Ascending aorta (tissue), 2 donors: ENCODE measurements at regions of chr19 and their contacts with region 1.

Region 1: DNA sequence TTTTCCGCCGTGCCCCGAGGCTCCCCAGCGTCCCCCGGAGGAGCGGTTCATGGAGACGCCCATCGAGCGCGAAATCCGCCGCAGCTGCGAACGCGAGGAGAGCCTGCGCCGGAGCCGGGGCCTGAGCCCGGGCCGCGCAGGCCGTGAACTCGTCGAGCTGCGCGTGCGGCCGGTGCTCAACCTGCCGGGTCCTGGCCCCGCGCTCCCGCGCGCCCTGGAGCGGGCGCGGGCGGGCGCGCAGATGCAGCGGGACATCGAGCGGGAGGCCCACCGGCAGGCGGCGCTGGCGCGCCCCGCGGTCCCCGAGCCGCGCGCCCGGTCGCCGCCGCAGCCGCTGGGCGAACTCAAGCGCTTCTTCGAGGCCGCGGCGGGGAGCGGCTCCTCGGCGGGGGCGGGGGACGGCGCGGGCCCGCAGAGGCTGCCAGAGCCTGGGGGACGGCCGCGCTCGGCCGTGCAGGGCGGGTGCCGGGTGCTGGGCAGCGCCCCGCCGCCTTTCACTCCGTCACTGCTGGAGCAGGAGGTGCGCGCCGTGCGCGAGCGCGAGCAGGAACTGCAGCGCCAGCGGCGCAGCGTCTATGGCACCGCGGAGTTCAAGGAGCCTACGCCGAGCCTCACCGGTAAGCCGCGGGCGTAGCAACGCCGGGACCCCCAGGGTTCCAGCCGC is 807 bp downstream of the MISP3 start:
- DNase-seq: peak in 1 of 2 donors; percentile 83
- H3K4me3 ChIP-seq: peak overlapping the region; percentile 62 to 73
- H3K27ac ChIP-seq: peak overlapping the region; percentile 90 to 94
- H3K4me1 ChIP-seq: peaks cover 0 to 12% of the 10 kb centered on the region in 2 donors
- H3K27me3 ChIP-seq: no peaks in the 10 kb centered on the region
- CTCF ChIP-seq: peak in 1 of 3 experiments; percentile 97

Region 2: DNA sequence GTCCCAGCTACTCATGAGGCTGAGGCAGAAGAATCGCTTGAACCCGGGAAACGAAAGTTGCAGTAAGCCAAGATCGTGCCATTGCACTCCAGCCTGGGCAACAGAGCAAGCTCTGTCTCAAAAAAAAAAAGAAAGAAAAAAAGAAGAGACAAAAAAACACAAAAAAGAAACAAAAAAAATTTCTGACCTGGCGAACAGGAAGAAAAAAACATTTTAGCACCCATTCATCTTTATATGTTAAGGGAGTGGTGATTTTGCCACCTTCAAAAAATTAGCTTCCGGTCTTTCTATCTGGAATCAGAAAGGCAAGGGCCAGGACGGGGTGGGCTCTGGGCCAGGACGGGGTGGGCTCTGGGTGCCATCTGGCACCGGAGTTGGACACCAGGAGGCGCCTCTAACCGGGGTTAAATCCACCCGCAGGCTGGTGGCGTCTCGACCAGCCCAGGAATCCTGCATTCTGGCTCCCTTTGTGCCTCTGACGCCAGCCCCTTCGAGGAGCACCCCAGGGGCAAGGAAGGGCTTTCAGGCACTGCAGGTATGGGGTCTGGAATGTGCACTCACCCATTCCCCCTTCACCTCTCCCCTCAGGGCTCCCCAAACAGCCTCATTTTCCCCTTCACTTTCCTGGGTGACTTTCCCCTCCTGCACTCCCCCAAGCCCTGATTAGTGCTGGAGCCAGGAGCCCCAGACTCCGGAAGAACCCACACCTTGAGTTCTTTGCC is 288.5 kb before region 1 on chr19:
- intact Hi-C with region 1: loop called (anchors 10 kb)
- DNase-seq: peak; percentile 28 to 87
- H3K4me3 ChIP-seq: no peak overlapping the region
- H3K27ac ChIP-seq: peak overlapping the region; percentile 76 to 94
- H3K4me1 ChIP-seq: peaks cover 25 to 53% of the 10 kb centered on the region in 2 donors
- H3K27me3 ChIP-seq: no peaks in the 10 kb centered on the region
- CTCF ChIP-seq: peak; percentile 72 to 83 (median 76)

Region 3: DNA sequence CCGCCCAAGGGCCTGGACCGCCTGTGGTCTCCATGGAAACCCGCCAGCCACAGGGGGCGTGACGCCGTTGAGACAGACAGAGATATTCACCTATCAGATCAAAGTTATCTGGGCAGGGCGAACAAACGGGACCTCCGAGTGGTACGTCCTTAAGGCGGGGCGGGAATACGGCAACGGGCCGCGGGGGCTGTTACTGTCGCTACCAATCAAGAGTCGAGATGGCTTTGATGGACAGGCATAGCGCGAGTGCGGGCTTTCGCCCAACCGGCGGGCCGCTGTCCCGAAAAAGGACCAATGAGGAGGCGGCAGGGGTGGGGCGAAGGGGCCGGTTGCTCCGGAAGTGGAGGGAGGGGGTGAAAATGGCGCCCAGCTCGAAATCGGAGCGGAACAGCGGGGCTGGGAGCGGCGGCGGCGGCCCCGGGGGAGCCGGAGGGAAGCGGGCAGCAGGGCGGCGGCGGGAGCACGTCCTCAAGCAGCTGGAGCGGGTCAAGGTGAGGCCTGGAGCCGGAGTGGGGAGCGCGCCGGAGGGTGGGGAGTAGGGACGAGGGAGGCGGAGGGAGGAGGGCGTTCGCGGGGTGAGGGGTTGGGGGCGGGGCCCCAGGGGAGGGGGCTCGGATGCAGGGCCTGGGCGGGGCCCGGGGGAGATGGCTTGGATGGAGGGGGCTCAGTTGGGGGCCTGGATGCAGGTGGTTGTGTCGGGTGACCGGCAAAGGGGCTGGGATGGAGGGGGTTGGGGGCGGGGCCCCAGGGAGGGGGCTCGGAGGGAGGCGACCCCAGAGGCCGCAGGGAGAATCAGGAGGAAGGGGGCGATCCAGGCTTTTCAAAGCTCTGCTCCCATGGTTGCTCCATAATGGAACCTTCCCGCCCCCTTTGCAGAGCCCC is 121.0 kb before region 1 on chr19 and contains the start of gene DCAF15:
- intact Hi-C with region 1: loop called (anchors 5 kb)
- DNase-seq: peak; percentile 99 to 100
- H3K4me3 ChIP-seq: peak within 1 kb of the TSS; percentile 79 to 81
- H3K27ac ChIP-seq: peak within 1 kb of the TSS; percentile 76 to 77
- H3K4me1 ChIP-seq: peaks cover 6 to 12% of the 10 kb centered on the region in 2 donors
- H3K27me3 ChIP-seq: no peaks in the 10 kb centered on the region
- CTCF ChIP-seq: no peak
- total RNA-seq, gene DCAF15: 35.0 TPM

Region 4: DNA sequence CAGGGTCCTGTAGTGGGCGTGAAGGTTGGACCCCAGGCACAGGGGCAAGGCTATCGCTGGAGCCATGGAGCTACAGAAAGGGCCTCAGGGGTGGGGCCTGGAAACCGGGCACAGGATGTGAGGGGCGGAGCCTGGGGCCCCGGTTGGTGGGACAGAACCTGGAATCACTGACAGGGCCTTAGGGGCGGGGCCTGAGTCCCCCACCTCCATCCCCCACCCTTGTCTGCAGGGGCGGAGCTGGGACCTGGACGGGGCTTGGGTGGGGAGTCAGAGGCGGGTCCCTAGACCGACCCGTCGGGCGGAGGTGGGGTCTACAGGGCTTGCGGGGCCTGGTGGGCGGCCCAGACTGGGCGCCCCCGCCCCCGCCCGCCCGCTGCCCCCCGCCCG is 95.1 kb before region 1 on chr19:
- intact Hi-C with region 1: no loop called
- DNase-seq: peak; percentile 60 to 89
- H3K4me3 ChIP-seq: peak overlapping the region; percentile 58 to 75
- H3K27ac ChIP-seq: peak overlapping the region; percentile 56 to 59
- H3K4me1 ChIP-seq: peaks cover 4 to 18% of the 10 kb centered on the region in 2 donors
- H3K27me3 ChIP-seq: no peaks in the 10 kb centered on the region
- CTCF ChIP-seq: no peak

Region 5: GRCh38 chr19:14023404-14024235 is 49.8 kb before region 1 on chr19:
- intact Hi-C with region 1: no loop called
- DNase-seq: no peak
- H3K4me3 ChIP-seq: no peak overlapping the region
- H3K27ac ChIP-seq: peak overlapping the region in 1 of 2 donors; percentile 24
- H3K4me1 ChIP-seq: no peaks in the 10 kb centered on the region
- H3K27me3 ChIP-seq: no peaks in the 10 kb centered on the region
- CTCF ChIP-seq: peak; percentile 21 to 47 (median 36)